CD4-positive, alpha-beta memory T cell (primary cell): ENCODE measurements at regions of chr22 and their contacts with region 1.

Region 1: GRCh38 chr22:38733329-38733723 is 22.5 kb downstream of the SUN2 start:
- DNase-seq: peak in 3 of 5 donors; percentile 41 to 51 (median 41)
- H3K4me3 ChIP-seq: no peak overlapping the region
- H3K4me3 Mint-ChIP-seq: peak overlapping the region in 2 of 8 donors; percentile 4 to 12
- H3K27ac ChIP-seq: peak overlapping the region; percentile 30
- H3K27ac Mint-ChIP-seq: peak overlapping the region; percentile 49 to 88 (median 84)
- H3K4me1 ChIP-seq: peaks cover 39% of the 10 kb centered on the region
- H3K4me1 Mint-ChIP-seq: peaks cover 18 to 60% (median 33%) of the 10 kb centered on the region in 4 donors
- H3K27me3 ChIP-seq: no peaks in the 10 kb centered on the region
- H3K27me3 Mint-ChIP-seq: no peaks in the 10 kb centered on the region

Region 2: GRCh38 chr22:38681784-38682335 is 51.5 kb before region 1 on chr22 and contains the start of gene TOMM22:
- CTCF ChIA-PET with region 1: no interaction called
- POLR2A ChIA-PET with region 1: interaction called, 23 read pairs
- intact Hi-C with region 1: no loop called
- DNase-seq: peak; percentile 80 to 86 (median 82)
- H3K4me3 ChIP-seq: peak within 1 kb of the TSS; percentile 79 to 83
- H3K4me3 Mint-ChIP-seq: peak within 1 kb of the TSS; percentile 97 to 100 (median 99)
- H3K27ac ChIP-seq: peak within 1 kb of the TSS; percentile 92
- H3K27ac Mint-ChIP-seq: peak within 1 kb of the TSS; percentile 92 to 99 (median 99)
- H3K4me1 ChIP-seq: peaks cover 15% of the 10 kb centered on the region
- H3K4me1 Mint-ChIP-seq: peaks cover 8 to 29% (median 17%) of the 10 kb centered on the region in 4 donors
- H3K27me3 ChIP-seq: no peaks in the 10 kb centered on the region
- H3K27me3 Mint-ChIP-seq: peaks cover 0 to 1% of the 10 kb centered on the region in 2 donors
- total RNA-seq, gene TOMM22: 41.2 to 42.3 TPM

Region 3: GRCh38 chr22:38712486-38713207 is 20.7 kb before region 1 on chr22:
- CTCF ChIA-PET with region 1: interaction called, 15 read pairs
- POLR2A ChIA-PET with region 1: interaction called, 1,746 read pairs
- intact Hi-C with region 1: no loop called
- DNase-seq: peak in 1 of 5 donors; percentile 13
- H3K4me3 ChIP-seq: no peak overlapping the region
- H3K4me3 Mint-ChIP-seq: peak overlapping the region in 1 of 8 donors; percentile 14
- H3K27ac ChIP-seq: no peak overlapping the region
- H3K27ac Mint-ChIP-seq: peak overlapping the region; percentile 21 to 90 (median 84)
- H3K4me1 ChIP-seq: peaks cover 72% of the 10 kb centered on the region
- H3K4me1 Mint-ChIP-seq: peaks cover 56 to 74% (median 67%) of the 10 kb centered on the region in 4 donors
- H3K27me3 ChIP-seq: no peaks in the 10 kb centered on the region
- H3K27me3 Mint-ChIP-seq: no peaks in the 10 kb centered on the region

Region 4: GRCh38 chr22:38744981-38745380 is 11.7 kb after region 1 on chr22:
- CTCF ChIA-PET with region 1: interaction called, 41 read pairs
- POLR2A ChIA-PET with region 1: interaction called, 1,746 read pairs
- intact Hi-C with region 1: no loop called
- DNase-seq: peak in 1 of 5 donors; percentile 9
- H3K4me3 ChIP-seq: no peak overlapping the region
- H3K4me3 Mint-ChIP-seq: peak overlapping the region in 1 of 8 donors; percentile 13
- H3K27ac ChIP-seq: no peak overlapping the region
- H3K27ac Mint-ChIP-seq: peak overlapping the region; percentile 27 to 83 (median 61)
- H3K4me1 ChIP-seq: peaks cover 68% of the 10 kb centered on the region
- H3K4me1 Mint-ChIP-seq: peaks cover 10 to 51% (median 25%) of the 10 kb centered on the region in 4 donors
- H3K27me3 ChIP-seq: no peaks in the 10 kb centered on the region
- H3K27me3 Mint-ChIP-seq: no peaks in the 10 kb centered on the region

Region 5: GRCh38 chr22:38766076-38766777 is 32.9 kb after region 1 on chr22:
- CTCF ChIA-PET with region 1: interaction called, 74 read pairs
- POLR2A ChIA-PET with region 1: interaction called, 1,746 read pairs
- intact Hi-C with region 1: loop called (anchors 1 kb)
- DNase-seq: peak in 4 of 5 donors; percentile 32 to 43 (median 38)
- H3K4me3 ChIP-seq: no peak overlapping the region
- H3K4me3 Mint-ChIP-seq: no peak overlapping the region
- H3K27ac ChIP-seq: no peak overlapping the region
- H3K27ac Mint-ChIP-seq: peak overlapping the region in 1 of 7 donors; percentile 68
- H3K4me1 ChIP-seq: peaks cover 13% of the 10 kb centered on the region
- H3K4me1 Mint-ChIP-seq: peaks cover 3 to 18% (median 12%) of the 10 kb centered on the region in 4 donors
- H3K27me3 ChIP-seq: no peaks in the 10 kb centered on the region
- H3K27me3 Mint-ChIP-seq: no peaks in the 10 kb centered on the region

Region 6: GRCh38 chr22:38843201-38843715 is 109.9 kb after region 1 on chr22:
- CTCF ChIA-PET with region 1: interaction called, 25 read pairs
- POLR2A ChIA-PET with region 1: interaction called, 49 read pairs
- intact Hi-C with region 1: loop called (anchors 5 kb)
- DNase-seq: peak; percentile 56 to 66 (median 61)
- H3K4me3 ChIP-seq: peak overlapping the region in 1 of 2 donors; percentile 50
- H3K4me3 Mint-ChIP-seq: peak overlapping the region in 1 of 8 donors; percentile 32
- H3K27ac ChIP-seq: no peak overlapping the region
- H3K27ac Mint-ChIP-seq: peak overlapping the region in 1 of 7 donors; percentile 69
- H3K4me1 ChIP-seq: peaks cover 20% of the 10 kb centered on the region
- H3K4me1 Mint-ChIP-seq: peaks cover 7 to 31% (median 17%) of the 10 kb centered on the region in 4 donors
- H3K27me3 ChIP-seq: peaks cover 9% of the 10 kb centered on the region
- H3K27me3 Mint-ChIP-seq: peaks cover 0 to 12% of the 10 kb centered on the region in 2 donors